GM12878 (cell line): ENCODE measurements at regions of chr11 and their contacts with region 1.

Region 1: GRCh38 chr11:355581-356458 is 13.5 kb upstream of the B4GALNT4 start:
- DNase-seq: peak; percentile 49
- ATAC-seq: peak; percentile 84
- H3K4me3 ChIP-seq: peak overlapping the region; percentile 73
- H3K27ac ChIP-seq: peak overlapping the region; percentile 100
- H3K4me1 ChIP-seq: peaks cover 33% of the 10 kb centered on the region
- H3K27me3 ChIP-seq: no peaks in the 10 kb centered on the region
- CTCF ChIP-seq: no peak
- EP300 ChIP-seq: peak in 1 of 2 experiments; percentile 6; a peak in 1 of 4 replicates
- POLR2A ChIP-seq: peak; percentile 80
- RAD21 ChIP-seq: no peak

Region 2: DNA sequence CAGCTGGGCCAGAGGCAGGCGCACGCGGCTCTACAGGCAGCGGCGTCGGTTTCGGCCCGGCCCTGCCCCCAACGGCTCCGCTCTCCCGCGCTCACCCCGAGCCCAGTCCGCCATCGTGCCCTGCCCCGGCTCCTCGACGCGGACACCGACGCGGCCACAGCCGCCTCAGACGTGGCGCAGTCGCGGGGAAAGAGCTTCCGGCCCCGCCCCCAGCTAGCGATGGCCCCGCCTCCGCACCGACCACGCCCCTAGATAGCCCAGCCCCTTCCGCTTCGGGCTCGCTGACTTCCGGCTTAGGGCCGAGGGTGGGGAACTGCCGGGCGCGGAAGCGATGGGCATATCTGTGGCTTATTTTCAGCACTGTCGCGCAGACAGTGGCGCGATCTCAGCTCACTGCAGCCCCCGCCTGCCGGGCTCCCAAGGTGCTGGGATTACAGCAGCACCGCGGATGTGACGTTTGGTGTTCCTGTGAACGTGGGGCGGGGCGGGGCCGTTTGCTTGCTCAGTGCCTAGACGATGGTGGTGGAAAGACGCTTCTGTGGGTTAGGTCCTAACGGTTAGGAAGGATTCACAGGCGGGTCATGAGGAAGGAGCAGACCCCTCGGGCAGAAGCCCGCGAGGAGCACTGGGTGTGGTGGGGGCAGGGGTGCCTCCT is 148.5 kb before region 1 on chr11 and contains the starts of genes BET1L and RIC8A:
- CTCF ChIA-PET with region 1: interaction called, 4 read pairs
- POLR2A ChIA-PET with region 1: interaction called, 15 read pairs
- RAD21 ChIA-PET with region 1: interaction called, 9 read pairs
- SMC1A ChIA-PET with region 1: interaction called, 3 read pairs
- in situ Hi-C with region 1: loop called (anchors 10 kb)
- intact Hi-C with region 1: loop called (anchors 5 kb)
- DNase-seq: peak; percentile 94
- ATAC-seq: peak; percentile 81
- H3K4me3 ChIP-seq: peak within 1 kb of the TSS; percentile 84
- H3K27ac ChIP-seq: peak within 1 kb of the TSS; percentile 97
- H3K4me1 ChIP-seq: peaks cover 27% of the 10 kb centered on the region
- H3K27me3 ChIP-seq: no peaks in the 10 kb centered on the region
- CTCF ChIP-seq: no peak
- EP300 ChIP-seq: no peak; a peak in 1 of 4 replicates
- POLR2A ChIP-seq: peak; percentile 97
- RAD21 ChIP-seq: no peak
- polyA plus RNA-seq, gene BET1L: 6.7 to 12.4 TPM
- polyA plus RNA-seq, gene RIC8A: 10.4 to 12.4 TPM

Region 3: DNA sequence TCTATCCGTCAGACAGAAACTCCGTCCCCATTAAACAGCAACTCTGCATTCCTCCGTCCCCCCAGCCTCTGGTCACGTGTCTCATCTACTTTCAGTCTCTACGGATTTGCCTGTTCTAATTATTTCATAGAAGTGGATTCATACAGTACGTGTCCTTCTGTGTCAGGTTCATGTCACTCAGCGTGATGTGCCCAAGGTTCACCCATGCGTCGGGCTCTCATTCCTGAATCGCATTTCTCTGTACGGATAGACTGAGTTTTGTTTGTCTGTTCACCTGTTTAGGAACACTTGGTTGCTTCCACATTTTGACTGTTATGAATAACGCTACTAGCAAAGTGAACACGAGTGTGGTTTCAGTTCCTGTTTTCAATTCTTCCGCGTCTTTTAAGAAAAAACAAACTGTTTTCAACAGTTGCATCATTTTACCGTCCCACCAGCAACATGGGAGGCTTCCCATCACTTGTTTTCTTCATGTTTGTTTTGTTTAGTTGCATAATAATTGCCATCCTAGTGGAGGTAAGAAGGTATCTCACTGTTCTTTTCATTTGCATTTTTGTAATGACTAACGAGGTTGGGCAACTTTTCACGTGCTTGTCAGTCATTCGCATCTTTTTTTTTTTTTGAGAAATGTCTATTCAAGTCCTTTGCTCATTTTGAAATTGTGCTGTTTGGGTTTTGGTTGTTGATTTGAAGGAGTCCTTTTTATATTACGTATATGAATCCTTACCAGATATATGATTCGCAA is 86.5 kb before region 1 on chr11:
- CTCF ChIA-PET with region 1: interaction called, 5 read pairs
- POLR2A ChIA-PET with region 1: interaction called, 35 read pairs
- RAD21 ChIA-PET with region 1: interaction called, 36 read pairs
- SMC1A ChIA-PET with region 1: interaction called, 5 read pairs
- in situ Hi-C with region 1: no loop called
- intact Hi-C with region 1: loop called (anchors 10 kb)
- DNase-seq: peak; percentile 99
- ATAC-seq: peak; percentile 80
- H3K4me3 ChIP-seq: peak overlapping the region; percentile 78
- H3K27ac ChIP-seq: peak overlapping the region; percentile 88
- H3K4me1 ChIP-seq: peaks cover 14% of the 10 kb centered on the region
- H3K27me3 ChIP-seq: no peaks in the 10 kb centered on the region
- CTCF ChIP-seq: no peak
- EP300 ChIP-seq: peak; percentile 98 to 99
- POLR2A ChIP-seq: no peak; the same call in 1 of the 2 replicates
- RAD21 ChIP-seq: no peak

Region 4: GRCh38 chr11:313787-314547 is 41.9 kb before region 1 on chr11 and contains the start of gene IFITM1:
- CTCF ChIA-PET with region 1: interaction called, 24 read pairs
- POLR2A ChIA-PET with region 1: interaction called, 40 read pairs
- RAD21 ChIA-PET with region 1: interaction called, 46 read pairs
- SMC1A ChIA-PET with region 1: interaction called, 19 read pairs
- in situ Hi-C with region 1: no loop called
- intact Hi-C with region 1: loop called (anchors 2 kb)
- DNase-seq: peak; percentile 92
- ATAC-seq: peak; percentile 47
- H3K4me3 ChIP-seq: peak within 1 kb of the TSS; percentile 87
- H3K27ac ChIP-seq: peak within 1 kb of the TSS; percentile 98
- H3K4me1 ChIP-seq: peaks cover 11% of the 10 kb centered on the region
- H3K27me3 ChIP-seq: no peaks in the 10 kb centered on the region; a peak in 1 of 4 replicates
- CTCF ChIP-seq: no peak
- EP300 ChIP-seq: no peak
- POLR2A ChIP-seq: peak; percentile 88
- RAD21 ChIP-seq: no peak
- polyA plus RNA-seq, gene IFITM1: 1,771 to 2,788 TPM

Region 5: DNA sequence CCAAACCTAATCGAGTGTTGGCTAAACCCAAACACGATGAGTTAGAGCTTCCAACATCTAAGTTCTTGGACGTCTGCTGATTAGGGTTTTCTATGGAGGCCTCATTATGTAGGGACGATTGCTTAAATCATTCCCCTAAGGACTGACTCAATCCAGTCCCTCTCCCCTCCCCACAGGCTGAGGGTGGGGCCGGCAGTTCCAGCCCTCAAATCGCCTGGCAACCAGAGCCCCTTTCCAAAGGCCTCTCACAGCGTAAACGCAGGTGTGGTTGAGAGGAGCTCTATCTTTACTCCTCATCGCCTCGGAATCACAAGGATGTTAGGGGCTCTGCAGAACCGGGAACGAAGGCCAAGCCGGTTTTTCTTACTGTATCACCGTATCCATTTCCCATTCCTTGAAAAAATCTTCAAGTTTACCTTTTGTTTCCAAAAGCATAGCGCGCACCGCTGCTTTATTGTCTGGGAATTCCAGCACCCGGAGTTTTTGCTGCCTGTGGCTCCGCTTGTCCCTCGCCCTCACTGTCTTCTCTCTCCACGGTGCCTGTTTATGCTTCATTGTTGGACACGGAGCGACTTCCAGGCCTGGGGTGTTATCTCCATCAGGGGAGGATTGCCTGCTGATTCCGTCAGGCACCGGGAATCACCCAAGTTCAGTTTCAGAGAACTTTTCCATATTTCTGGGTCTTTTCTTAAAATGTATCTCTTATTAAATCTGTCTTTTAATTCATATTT is 21.4 kb before region 1 on chr11:
- CTCF ChIA-PET with region 1: interaction called, 26 read pairs
- POLR2A ChIA-PET with region 1: interaction called, 86 read pairs
- RAD21 ChIA-PET with region 1: interaction called, 68 read pairs
- SMC1A ChIA-PET with region 1: interaction called, 44 read pairs
- in situ Hi-C with region 1: no loop called
- intact Hi-C with region 1: no loop called
- DNase-seq: no peak
- ATAC-seq: no peak
- H3K4me3 ChIP-seq: no peak overlapping the region
- H3K27ac ChIP-seq: no peak overlapping the region
- H3K4me1 ChIP-seq: peaks cover 25% of the 10 kb centered on the region
- H3K27me3 ChIP-seq: no peaks in the 10 kb centered on the region
- CTCF ChIP-seq: no peak
- EP300 ChIP-seq: no peak
- POLR2A ChIP-seq: no peak
- RAD21 ChIP-seq: no peak

Region 6: GRCh38 chr11:420054-420910 is 64.5 kb after region 1 on chr11:
- CTCF ChIA-PET with region 1: no interaction called
- POLR2A ChIA-PET with region 1: no interaction called
- RAD21 ChIA-PET with region 1: no interaction called
- SMC1A ChIA-PET with region 1: no interaction called
- in situ Hi-C with region 1: no loop called
- intact Hi-C with region 1: no loop called
- DNase-seq: no peak
- ATAC-seq: no peak
- H3K4me3 ChIP-seq: no peak overlapping the region
- H3K27ac ChIP-seq: no peak overlapping the region
- H3K4me1 ChIP-seq: peaks cover 6% of the 10 kb centered on the region
- H3K27me3 ChIP-seq: no peaks in the 10 kb centered on the region
- CTCF ChIP-seq: no peak
- EP300 ChIP-seq: no peak
- POLR2A ChIP-seq: 0 out of 2 replicates have a peak, but pooled peaks have one; percentile 9
- RAD21 ChIP-seq: no peak